Dendritic cell treated with granulocyte-macrophage colony-stimulating factor and Interleukin-4, amounts not matched to agents 40 ng/mL and 50 ng/mL, for 4 days (primary cell): ENCODE measurements at regions of chr20 and their contacts with region 1.

Region 1: DNA sequence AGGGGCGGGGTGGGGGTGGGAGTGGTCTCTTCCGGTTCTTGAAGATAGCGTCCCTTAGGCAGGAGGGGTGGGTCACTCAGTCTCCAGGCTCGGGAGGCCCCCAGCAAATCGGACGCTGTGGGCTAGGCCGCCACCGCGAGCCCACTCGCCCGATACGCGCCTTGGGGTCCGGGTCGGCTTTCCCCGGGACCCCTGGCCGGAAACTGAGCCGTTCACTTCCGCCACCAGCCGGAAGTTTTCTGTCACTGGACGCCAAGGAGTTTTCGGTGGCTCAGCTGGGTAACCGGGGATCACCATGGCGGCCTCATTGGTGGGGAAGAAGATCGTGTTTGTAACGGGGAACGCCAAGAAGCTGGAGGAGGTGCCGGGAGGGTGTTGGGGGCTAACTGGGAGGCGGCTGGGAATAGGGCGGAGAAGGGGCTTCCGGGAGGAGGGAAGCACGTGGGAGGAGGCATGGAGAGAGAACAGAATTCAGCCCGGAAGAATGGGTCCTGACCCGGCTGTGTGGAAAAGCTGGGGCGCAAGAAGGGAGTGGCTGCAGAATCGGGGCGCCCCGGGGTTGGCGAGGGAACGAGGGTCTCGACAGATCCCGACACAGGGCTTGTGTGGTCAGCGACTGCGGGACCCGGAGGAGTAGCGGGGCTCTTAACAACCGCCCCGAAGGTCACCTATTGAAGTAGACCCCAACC is at the start of gene ITPA:
- H3K4me3 Mint-ChIP-seq: peak within 1 kb of the TSS; percentile 96
- H3K27ac Mint-ChIP-seq: peak within 1 kb of the TSS; percentile 98
- H3K4me1 Mint-ChIP-seq: peaks cover 40% of the 10 kb centered on the region
- H3K27me3 Mint-ChIP-seq: no peaks in the 10 kb centered on the region

Region 2: DNA sequence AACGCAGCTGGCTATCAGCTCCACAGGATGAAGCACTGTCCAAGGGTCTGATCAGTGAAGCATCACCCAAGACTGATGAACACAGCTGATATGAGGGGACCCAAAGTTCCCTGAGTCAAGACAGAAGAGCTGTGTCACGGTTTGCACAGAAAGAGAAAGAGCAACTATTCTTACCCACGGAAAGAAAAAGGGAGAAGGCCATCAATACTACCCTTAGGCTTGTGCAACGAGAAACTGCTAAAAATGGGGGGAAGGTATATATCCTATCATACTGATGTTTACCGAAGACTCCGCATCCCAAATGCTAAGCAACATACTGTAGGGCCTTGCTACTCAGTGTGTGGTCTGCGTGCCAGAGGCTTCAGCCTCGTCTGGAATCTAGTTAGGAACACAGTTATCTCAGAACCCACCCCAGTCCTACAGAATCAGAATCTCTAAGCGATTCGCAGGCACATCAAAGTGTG is 50.4 kb before region 1 on chr20:
- intact Hi-C with region 1: loop called (anchors 1 kb)
- H3K4me3 Mint-ChIP-seq: peak overlapping the region; percentile 93
- H3K27ac Mint-ChIP-seq: peak overlapping the region; percentile 97
- H3K4me1 Mint-ChIP-seq: peaks cover 39% of the 10 kb centered on the region
- H3K27me3 Mint-ChIP-seq: peaks cover 4% of the 10 kb centered on the region